H1 (cell line): ENCODE measurements at regions of chr4 and their contacts with region 1.

Region 1: GRCh38 chr4:182699795-182700194 is 217.4 kb downstream of the DCTD start:
- DNase-seq: no peak
- H3K4me3 ChIP-seq: no peak overlapping the region
- H3K27ac ChIP-seq: no peak overlapping the region
- H3K4me1 ChIP-seq: peaks cover 0 to 8% (median 4%) of the 10 kb centered on the region in 4 experiments; a peak in 3 of 7 replicates
- H3K27me3 ChIP-seq: no peaks in the 10 kb centered on the region
- CTCF ChIP-seq: no peak
- EP300 ChIP-seq: no peak
- POLR2A ChIP-seq: no peak
- RAD21 ChIP-seq: no peak

Region 2: DNA sequence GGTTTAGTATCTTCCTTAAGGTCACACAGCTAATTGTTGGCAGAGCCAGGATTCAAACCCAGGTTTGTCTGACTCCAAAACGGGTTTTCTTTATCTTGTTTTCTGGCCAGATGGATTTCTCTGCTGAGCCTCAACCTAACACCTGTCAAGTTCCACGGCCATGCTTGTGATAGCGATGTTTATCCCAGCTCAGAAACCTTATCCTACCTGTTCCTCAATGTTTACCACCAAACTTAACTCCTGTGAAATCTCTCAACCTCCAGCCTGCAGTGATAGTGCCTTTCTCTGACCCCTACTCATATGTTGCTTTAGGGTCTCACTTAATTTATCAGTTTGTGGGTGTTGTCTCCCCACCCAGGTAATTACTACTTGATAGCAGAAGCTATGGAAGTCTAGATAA is 28.6 kb before region 1 on chr4:
- CTCF ChIA-PET with region 1: no interaction called
- POLR2A ChIA-PET with region 1: no interaction called
- DNase-seq: no peak
- H3K4me3 ChIP-seq: no peak overlapping the region
- H3K27ac ChIP-seq: no peak overlapping the region
- H3K4me1 ChIP-seq: no peaks in the 10 kb centered on the region
- H3K27me3 ChIP-seq: no peaks in the 10 kb centered on the region
- CTCF ChIP-seq: no peak
- EP300 ChIP-seq: no peak
- POLR2A ChIP-seq: no peak
- RAD21 ChIP-seq: no peak

Region 3: DNA sequence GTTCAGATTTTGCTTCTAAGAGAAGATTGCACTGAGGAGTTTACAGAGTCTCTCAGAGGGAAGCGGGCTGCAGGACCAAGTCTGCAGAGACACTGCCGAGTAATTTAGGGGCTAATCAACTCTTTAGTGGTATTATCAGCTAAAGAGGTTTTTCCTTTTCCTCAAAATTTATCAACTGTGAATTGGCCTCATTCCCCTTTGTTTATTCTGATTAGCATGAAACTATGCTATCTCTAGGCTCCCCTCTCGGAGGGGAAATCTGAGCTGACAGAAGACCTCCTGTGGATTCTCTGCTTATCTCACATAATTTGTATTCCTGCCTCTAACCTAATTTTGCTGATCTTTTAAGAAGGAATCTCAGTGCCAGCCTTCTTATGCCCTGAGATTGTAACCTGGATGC is 16.4 kb after region 1 on chr4:
- CTCF ChIA-PET with region 1: interaction called, 11 read pairs
- POLR2A ChIA-PET with region 1: interaction called, 3 read pairs
- DNase-seq: no peak
- H3K4me3 ChIP-seq: peak overlapping the region in 1 of 4 experiments; percentile 15; a peak in 1 of 8 replicates
- H3K27ac ChIP-seq: 0 out of 2 replicates have a peak overlapping the region, but pooled peaks have one; percentile 32
- H3K4me1 ChIP-seq: peaks cover 0 to 9% (median 5%) of the 10 kb centered on the region in 4 experiments; a peak in 4 of 7 replicates
- H3K27me3 ChIP-seq: no peaks in the 10 kb centered on the region
- CTCF ChIP-seq: no peak
- EP300 ChIP-seq: no peak
- POLR2A ChIP-seq: no peak
- RAD21 ChIP-seq: no peak